ENCODE measurements at regions of chr4 and their contacts with region 1.

Region 1: GRCh38 chr4:112938461-112939058 is 110.9 kb upstream of the ANK2 start:
- DNase-seq: no peak
- H3K4me3 Mint-ChIP-seq: no peak overlapping the region
- H3K27ac Mint-ChIP-seq: no peak overlapping the region
- H3K4me1 Mint-ChIP-seq: no peaks in the 10 kb centered on the region
- H3K27me3 Mint-ChIP-seq: no peaks in the 10 kb centered on the region
- CTCF ChIP-seq: peak; percentile 21

Region 2: GRCh38 chr4:112633477-112634235 is 304.9 kb before region 1 on chr4:
- CTCF ChIA-PET with region 1: no interaction called
- intact Hi-C with region 1: loop called (anchors 2 kb)
- DNase-seq: no peak
- H3K4me3 Mint-ChIP-seq: no peak overlapping the region
- H3K27ac Mint-ChIP-seq: no peak overlapping the region
- H3K4me1 Mint-ChIP-seq: no peaks in the 10 kb centered on the region
- H3K27me3 Mint-ChIP-seq: no peaks in the 10 kb centered on the region
- CTCF ChIP-seq: no peak

Region 3: DNA sequence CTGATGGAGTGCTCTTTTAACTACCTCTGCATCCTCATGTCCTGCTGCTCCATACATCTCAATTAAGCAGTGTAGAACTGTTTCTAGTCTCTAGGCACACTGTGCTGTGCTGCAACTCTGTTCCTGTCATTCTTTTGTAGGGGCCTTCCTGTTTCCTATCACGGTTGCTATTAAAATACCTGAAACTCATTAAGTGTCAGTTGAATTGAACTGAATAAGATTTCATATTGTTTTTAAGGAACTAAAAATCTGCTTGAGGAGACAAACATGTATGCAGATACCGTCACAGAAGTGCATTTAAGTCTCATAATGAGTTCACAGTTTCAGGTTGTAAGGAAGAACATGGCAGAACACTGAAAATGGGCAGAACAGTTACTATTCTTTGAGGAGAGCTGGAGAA is 131.5 kb before region 1 on chr4:
- CTCF ChIA-PET with region 1: no interaction called
- intact Hi-C with region 1: no loop called
- DNase-seq: no peak
- H3K4me3 Mint-ChIP-seq: no peak overlapping the region
- H3K27ac Mint-ChIP-seq: no peak overlapping the region
- H3K4me1 Mint-ChIP-seq: peaks cover 1% of the 10 kb centered on the region
- H3K27me3 Mint-ChIP-seq: peaks cover under 1% of the 10 kb centered on the region
- CTCF ChIP-seq: no peak

Region 4: DNA sequence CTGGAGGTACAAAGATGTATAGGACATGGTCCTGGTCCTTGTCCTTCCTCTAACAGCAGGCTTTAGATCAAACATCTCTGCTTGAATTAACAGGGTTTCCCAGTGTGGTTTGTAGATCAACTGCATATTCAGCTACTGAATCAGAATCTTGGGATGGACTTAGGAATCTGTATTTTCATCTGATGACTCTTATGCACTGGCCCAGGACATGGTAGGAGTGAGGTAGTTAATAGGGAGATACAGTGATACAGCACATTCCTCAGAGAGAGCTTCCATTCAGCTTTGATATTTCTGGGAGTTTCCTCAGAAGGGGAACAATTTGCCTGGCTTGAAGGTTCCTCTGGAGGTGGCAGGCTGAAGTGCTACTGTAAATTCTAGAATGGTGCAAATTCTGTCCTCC is 98.5 kb before region 1 on chr4:
- CTCF ChIA-PET with region 1: no interaction called
- intact Hi-C with region 1: no loop called
- DNase-seq: no peak
- H3K4me3 Mint-ChIP-seq: no peak overlapping the region
- H3K27ac Mint-ChIP-seq: no peak overlapping the region
- H3K4me1 Mint-ChIP-seq: no peaks in the 10 kb centered on the region
- H3K27me3 Mint-ChIP-seq: no peaks in the 10 kb centered on the region
- CTCF ChIP-seq: no peak

Region 5: DNA sequence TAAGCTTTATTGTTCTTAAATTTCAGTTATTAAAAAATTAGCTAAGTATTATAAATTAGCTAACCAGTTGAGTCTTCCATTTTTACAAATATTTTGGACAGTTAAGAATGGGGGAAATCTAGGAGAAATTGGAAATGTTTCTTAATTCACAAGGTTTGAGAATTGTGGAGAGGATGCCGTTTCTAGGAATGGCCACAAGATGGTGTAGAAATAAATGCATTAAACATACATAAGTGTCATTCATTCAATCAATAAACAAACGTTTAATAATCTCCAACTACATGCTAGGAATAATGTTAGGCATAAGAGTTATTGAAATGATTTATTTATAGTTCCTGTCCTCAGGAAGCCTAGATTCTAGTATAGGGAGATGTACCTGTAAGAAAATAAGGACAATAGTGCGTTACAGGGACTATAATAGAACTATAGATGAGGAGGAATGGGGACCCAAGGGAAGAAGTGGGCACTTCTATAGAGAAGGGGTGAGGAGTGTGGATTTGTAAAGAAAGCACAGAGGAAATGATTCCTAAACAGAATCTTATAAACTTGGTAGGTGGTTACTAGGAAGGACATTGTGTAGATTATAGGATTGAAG is 84.8 kb before region 1 on chr4:
- CTCF ChIA-PET with region 1: interaction called, 4 read pairs
- intact Hi-C with region 1: loop called (anchors 1 kb)
- DNase-seq: no peak
- H3K4me3 Mint-ChIP-seq: no peak overlapping the region
- H3K27ac Mint-ChIP-seq: no peak overlapping the region
- H3K4me1 Mint-ChIP-seq: peaks cover 10% of the 10 kb centered on the region
- H3K27me3 Mint-ChIP-seq: no peaks in the 10 kb centered on the region
- CTCF ChIP-seq: peak; percentile 29

Measured in Calu3 (cell line).